ENCODE measurements at regions of chr5 and their contacts with region 1.

Region 1: GRCh38 chr5:59039296-59040023 is 456.6 kb downstream of the RAB3C start:
- DNase-seq: peak; percentile 83
- H3K4me3 ChIP-seq: peak overlapping the region; percentile 72
- H3K27ac ChIP-seq: peak overlapping the region; percentile 65
- H3K4me1 ChIP-seq: peaks cover 39% of the 10 kb centered on the region
- H3K27me3 ChIP-seq: no peaks in the 10 kb centered on the region
- CTCF ChIP-seq: no peak

Region 2: DNA sequence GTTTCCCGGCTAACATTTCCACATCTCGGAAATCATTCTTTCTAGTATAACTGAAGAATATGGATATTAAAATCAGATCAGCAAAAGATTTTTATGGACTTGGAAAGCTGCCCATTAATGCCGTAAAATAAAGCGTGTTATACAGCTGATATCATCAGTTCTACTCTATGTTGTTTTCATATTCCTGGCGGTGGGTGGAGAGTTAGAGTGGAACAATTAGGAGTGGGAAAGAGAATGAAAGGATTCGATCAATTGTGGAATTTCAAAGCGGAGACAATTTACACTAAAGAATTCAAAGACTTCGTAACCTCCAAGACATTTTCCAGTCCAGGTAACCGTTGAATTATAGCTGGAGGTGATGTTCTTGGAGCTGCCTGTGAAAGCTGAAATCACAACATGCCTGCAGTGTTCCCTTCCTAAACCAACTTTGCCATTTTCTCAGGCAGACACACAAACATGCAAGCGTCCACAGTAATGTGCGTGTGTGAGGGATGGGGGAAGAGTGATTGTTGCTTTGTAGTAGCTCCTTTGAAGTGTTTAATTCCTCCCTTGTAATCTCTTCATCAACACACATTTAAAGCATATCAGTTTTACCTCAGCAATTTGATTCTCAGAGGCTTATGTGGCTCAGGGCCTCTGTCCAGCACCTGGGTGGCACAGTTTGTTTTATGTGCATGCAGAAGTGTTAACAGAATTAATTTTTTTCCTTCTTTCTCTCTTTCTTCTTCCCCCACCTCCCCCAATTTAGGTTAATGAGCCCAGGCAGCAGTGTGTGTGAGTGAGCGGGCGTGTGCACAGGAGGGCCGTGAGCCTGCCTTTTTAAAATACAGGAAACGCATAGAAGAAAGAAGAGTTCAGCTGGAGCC is 87.5 kb after region 1 on chr5:
- CTCF ChIA-PET with region 1: no interaction called
- POLR2A ChIA-PET with region 1: interaction called, 3 read pairs
- intact Hi-C with region 1: loop called (anchors 2 kb)
- DNase-seq: peak; percentile 64
- H3K4me3 ChIP-seq: peak overlapping the region; percentile 22
- H3K27ac ChIP-seq: peak overlapping the region; percentile 98
- H3K4me1 ChIP-seq: peaks cover 51% of the 10 kb centered on the region
- H3K27me3 ChIP-seq: no peaks in the 10 kb centered on the region
- CTCF ChIP-seq: no peak

Region 3: DNA sequence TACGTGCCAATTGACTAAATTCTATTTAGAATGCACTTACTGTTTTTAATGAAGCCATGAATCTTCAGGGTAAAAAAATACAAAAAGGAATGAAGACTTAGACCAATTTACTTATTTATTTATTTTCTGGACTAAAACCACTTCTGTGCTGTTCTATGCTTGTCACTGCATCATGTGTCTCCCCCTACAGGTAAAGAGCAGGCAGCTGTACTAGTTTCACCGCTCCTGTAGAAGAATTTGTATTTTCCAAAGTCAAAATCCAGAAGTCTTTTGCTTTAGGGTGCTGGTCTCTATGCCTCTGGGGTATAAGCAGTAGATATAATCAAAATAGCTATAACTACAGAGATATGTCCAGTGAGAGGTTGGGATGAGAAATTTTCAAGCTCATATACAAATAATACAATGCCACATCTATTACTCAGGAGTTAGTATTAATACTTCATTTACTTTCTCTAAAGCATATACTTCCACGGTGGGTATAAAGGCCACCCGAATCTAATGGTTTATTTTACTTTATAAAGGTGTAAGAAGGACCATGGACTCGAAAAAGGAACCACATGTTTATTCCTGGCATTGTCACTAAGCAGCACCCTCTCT is 134.9 kb after region 1 on chr5:
- CTCF ChIA-PET with region 1: interaction called, 14 read pairs
- POLR2A ChIA-PET with region 1: no interaction called
- intact Hi-C with region 1: loop called (anchors 1 kb)
- DNase-seq: peak; percentile 80
- H3K4me3 ChIP-seq: no peak overlapping the region
- H3K27ac ChIP-seq: no peak overlapping the region
- H3K4me1 ChIP-seq: no peaks in the 10 kb centered on the region
- H3K27me3 ChIP-seq: no peaks in the 10 kb centered on the region
- CTCF ChIP-seq: peak; percentile 93